Ovary (tissue), 10 donors: ENCODE measurements at regions of chr16 and their contacts with region 1.

Region 1: DNA sequence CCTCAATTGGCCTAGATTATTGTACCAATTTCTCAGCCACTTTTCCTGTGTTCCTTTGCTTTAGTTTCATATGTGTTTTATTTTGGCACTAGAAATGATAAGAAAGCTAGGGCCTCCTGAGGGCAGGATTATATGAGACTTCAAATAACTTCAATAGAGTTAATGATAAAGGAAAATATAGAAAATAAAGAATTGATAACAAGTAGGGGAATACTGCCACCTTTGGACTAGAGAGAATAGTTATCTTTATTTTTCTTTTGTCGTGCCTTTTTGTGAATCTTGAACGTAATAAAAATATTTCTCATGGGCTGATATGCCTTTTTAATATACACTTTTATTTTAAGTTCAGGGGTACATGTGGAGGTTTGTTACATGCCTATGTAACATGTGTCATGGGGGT is 29.3 kb upstream of the RBL2 start:
- DNase-seq: no peak
- H3K4me3 ChIP-seq: no peak overlapping the region
- H3K27ac ChIP-seq: no peak overlapping the region
- H3K4me1 ChIP-seq: no peaks in the 10 kb centered on the region
- H3K27me3 ChIP-seq: no peaks in the 10 kb centered on the region
- CTCF ChIP-seq: no peak
- EP300 ChIP-seq: no peak
- POLR2A ChIP-seq: no peak

Region 2: DNA sequence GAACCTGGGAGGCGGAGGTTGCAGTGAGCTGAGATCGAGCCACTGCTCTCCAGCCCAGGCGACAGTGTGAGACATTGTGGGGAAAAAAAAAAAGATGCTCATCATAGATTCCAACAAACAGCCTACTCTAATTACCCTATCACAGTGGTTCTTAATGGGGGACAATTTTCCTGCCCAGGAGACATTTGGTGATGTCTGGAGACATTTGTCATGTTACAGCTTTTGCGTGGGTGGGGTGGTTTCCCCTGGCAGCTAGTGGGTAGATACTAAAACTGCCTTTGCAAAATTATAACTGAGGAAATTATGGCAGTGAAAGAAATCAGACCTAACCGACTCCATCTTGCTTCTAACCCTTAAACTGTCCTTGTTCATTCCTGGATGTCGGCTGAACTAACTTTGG is 63.2 kb before region 1 on chr16:
- intact Hi-C with region 1: no loop called
- DNase-seq: no peak
- H3K4me3 ChIP-seq: no peak overlapping the region
- H3K27ac ChIP-seq: no peak overlapping the region
- H3K4me1 ChIP-seq: no peaks in the 10 kb centered on the region
- H3K27me3 ChIP-seq: no peaks in the 10 kb centered on the region
- CTCF ChIP-seq: no peak
- EP300 ChIP-seq: no peak
- POLR2A ChIP-seq: no peak

Region 3: GRCh38 chr16:53372992-53373871 is 31.7 kb before region 1 on chr16:
- intact Hi-C with region 1: loop called in 1 of 4 experiments (anchors 2 kb)
- DNase-seq: no peak
- H3K4me3 ChIP-seq: no peak overlapping the region
- H3K27ac ChIP-seq: no peak overlapping the region
- H3K4me1 ChIP-seq: peaks cover 3% of the 10 kb centered on the region
- H3K27me3 ChIP-seq: no peaks in the 10 kb centered on the region
- CTCF ChIP-seq: no peak
- EP300 ChIP-seq: no peak
- POLR2A ChIP-seq: no peak